ENCODE measurements at regions of chr5 and their contacts with region 1.

Region 1: GRCh38 chr5:54959673-54960418 is 25.5 kb downstream of the ESM1 start:
- DNase-seq: peak; percentile 56
- H3K4me3 ChIP-seq: no peak overlapping the region
- H3K27ac ChIP-seq: no peak overlapping the region
- H3K4me1 ChIP-seq: no peaks in the 10 kb centered on the region
- H3K27me3 ChIP-seq: no peaks in the 10 kb centered on the region
- CTCF ChIP-seq: peak; percentile 65

Region 2: GRCh38 chr5:54991416-54991815 is 31.6 kb after region 1 on chr5:
- CTCF ChIA-PET with region 1: interaction called, 13 read pairs
- POLR2A ChIA-PET with region 1: no interaction called
- intact Hi-C with region 1: no loop called
- DNase-seq: no peak
- H3K4me3 ChIP-seq: no peak overlapping the region
- H3K27ac ChIP-seq: no peak overlapping the region
- H3K4me1 ChIP-seq: no peaks in the 10 kb centered on the region
- H3K27me3 ChIP-seq: peaks cover 32% of the 10 kb centered on the region
- CTCF ChIP-seq: no peak

Measured in A673 (cell line).